HCT116 (cell line): ENCODE measurements at regions of chr10 and their contacts with region 1.

Region 1: GRCh38 chr10:5094265-5095205 is at the start of gene AKR1C3:
- DNase-seq: peak; percentile 51
- ATAC-seq: peak; percentile 79
- H3K4me3 ChIP-seq: peak within 1 kb of the TSS; percentile 25 to 48
- H3K27ac ChIP-seq: no peak within 1 kb of the TSS
- H3K4me1 ChIP-seq: no peaks in the 10 kb centered on the region; a peak in 1 of 4 replicates
- H3K27me3 ChIP-seq: no peaks in the 10 kb centered on the region
- CTCF ChIP-seq: peak; percentile 56 to 78 (median 65)
- POLR2A ChIP-seq: no peak
- RAD21 ChIP-seq: peak; percentile 65
- total RNA-seq, gene AKR1C3: 3.0 TPM

Region 2: DNA sequence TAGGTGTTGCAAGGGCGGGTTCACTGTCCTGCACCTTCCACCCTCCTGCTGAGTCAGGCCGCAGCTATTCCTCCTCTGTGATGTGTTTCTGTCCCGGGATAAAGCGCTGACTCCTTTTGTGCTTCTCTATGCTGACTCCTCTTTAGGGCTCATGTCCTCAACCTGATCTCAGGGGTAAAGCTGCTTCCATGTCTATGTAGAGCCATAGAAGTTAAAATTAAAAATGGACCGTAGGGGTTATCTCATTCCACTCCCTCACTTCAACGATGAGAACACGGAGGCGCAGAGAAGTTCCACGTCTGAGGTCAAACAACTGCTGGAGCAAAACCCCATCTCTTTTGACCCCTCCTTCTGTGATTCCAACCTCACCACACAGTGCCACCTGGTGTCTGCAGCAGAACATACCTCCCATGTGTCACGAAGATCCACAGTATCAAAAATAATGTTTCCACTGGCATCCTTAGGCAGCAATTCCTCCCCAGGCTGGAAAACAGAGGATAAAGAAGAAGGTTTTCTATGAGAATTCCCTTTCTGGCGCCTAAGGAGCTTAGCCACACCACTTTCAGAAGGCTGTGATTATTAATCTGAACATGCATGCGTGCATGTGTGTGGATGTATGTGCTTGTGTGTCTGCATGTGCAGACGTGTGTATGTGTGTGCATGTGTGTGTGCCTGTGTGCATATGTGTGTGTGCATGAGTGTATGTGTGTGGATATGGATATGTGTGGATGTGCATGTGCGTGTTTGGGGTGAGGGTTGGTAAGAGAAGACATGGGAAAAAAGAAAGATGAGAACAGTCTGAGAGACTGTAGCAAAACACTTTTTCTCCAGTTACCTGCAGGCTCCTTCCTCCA is 189.0 kb after region 1 on chr10:
- CTCF ChIA-PET with region 1: no interaction called
- POLR2A ChIA-PET with region 1: no interaction called
- RAD21 ChIA-PET with region 1: no interaction called
- intact Hi-C with region 1: loop called (anchors 5 kb)
- DNase-seq: peak; percentile 55
- ATAC-seq: peak; percentile 97
- H3K4me3 ChIP-seq: no peak overlapping the region
- H3K27ac ChIP-seq: no peak overlapping the region
- H3K4me1 ChIP-seq: peaks cover 0 to 6% of the 10 kb centered on the region in 2 experiments; a peak in 1 of 4 replicates
- H3K27me3 ChIP-seq: no peaks in the 10 kb centered on the region
- CTCF ChIP-seq: peak; percentile 77 to 90 (median 80)
- POLR2A ChIP-seq: no peak
- RAD21 ChIP-seq: peak; percentile 79

Region 3: DNA sequence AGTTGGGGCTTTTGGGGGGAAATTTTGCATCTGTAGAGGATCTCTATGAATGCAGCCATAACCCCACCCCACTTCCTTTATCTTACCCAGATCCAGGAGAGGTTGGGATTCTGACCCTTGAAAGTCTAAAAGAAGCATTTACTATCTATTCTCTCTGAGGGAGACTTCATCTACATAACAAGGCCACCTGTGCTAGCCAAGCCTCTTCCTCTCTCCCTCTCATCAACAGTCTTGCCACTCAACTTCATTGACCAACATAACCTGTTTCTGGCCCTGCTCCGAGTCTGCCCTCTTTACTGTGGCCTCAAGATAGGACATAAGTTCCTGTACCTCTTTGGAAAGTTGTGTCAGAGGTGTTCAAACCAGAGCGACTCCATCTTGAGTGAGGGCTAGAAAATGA is 290.7 kb after region 1 on chr10:
- CTCF ChIA-PET with region 1: no interaction called
- POLR2A ChIA-PET with region 1: no interaction called
- RAD21 ChIA-PET with region 1: no interaction called
- intact Hi-C with region 1: loop called (anchors 1 kb)
- DNase-seq: no peak
- ATAC-seq: no peak
- H3K4me3 ChIP-seq: no peak overlapping the region
- H3K27ac ChIP-seq: no peak overlapping the region
- H3K4me1 ChIP-seq: no peaks in the 10 kb centered on the region
- H3K27me3 ChIP-seq: no peaks in the 10 kb centered on the region
- CTCF ChIP-seq: no peak
- POLR2A ChIP-seq: no peak
- RAD21 ChIP-seq: no peak